Activated B cell treated with CpG ODN at 0.5 μM for 24 hours (primary cell): ENCODE measurements at regions of chr4 and their contacts with region 1.

Region 1: GRCh38 chr4:141636082-141636770 is at the start of gene IL15:
- DNase-seq: peak; percentile 35
- ATAC-seq: peak; percentile 73
- H3K4me3 Mint-ChIP-seq: peak within 1 kb of the TSS; percentile 94
- H3K27ac Mint-ChIP-seq: peak within 1 kb of the TSS; percentile 84
- H3K4me1 Mint-ChIP-seq: peaks cover 39% of the 10 kb centered on the region
- H3K27me3 Mint-ChIP-seq: no peaks in the 10 kb centered on the region
- CTCF ChIP-seq: no peak
- total RNA-seq, gene IL15: 3.4 and 3.5 TPM in 2 replicates

Region 2: DNA sequence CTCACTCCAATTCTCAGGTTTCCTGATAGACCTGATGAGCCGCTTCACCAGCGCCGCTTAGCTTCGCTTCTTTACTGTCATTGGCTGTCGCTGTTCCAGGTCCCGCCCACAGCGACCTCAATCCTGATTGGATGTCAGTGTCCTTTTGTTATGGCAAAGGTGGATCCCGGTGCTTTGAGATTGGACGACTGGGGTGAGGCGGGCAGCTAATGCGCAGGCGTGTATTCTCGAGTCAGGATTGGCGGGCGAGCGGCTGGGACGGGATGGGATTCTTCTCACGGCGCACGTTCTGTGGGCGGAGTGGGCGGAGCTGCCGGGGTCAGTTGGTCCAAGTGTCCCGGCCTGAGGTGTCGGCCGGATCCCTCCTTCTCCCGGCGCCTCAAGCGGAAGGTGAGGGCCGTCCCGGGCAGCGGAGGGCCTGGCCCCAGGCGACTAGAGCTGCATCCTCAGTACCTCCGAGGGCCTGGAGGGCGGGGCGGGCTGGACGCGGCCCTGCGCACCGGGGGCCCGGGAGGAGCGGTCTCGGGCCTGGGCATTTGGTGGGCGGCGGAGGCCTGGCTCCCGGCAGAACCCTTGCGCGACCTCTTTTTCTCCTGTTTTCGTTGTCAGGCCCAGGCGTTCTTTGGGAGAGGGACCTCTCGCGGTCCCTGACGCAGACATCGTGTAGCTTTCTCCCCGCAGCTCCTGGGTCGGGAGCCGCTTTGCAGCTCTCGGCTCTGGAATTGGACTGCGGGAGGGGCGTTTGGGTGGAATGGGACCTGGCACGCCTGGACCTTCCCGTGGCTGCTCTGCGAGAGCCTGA is 1262.7 kb before region 1 on chr4 and contains the start of gene SCOC:
- CTCF ChIA-PET with region 1: no interaction called
- POLR2A ChIA-PET with region 1: no interaction called
- intact Hi-C with region 1: loop called (anchors 5 kb)
- DNase-seq: peak; percentile 85
- ATAC-seq: peak; percentile 95
- H3K4me3 Mint-ChIP-seq: no peak within 1 kb of the TSS
- H3K27ac Mint-ChIP-seq: peak within 1 kb of the TSS; percentile 74
- H3K4me1 Mint-ChIP-seq: peaks cover 22% of the 10 kb centered on the region
- H3K27me3 Mint-ChIP-seq: no peaks in the 10 kb centered on the region
- CTCF ChIP-seq: no peak
- total RNA-seq, gene SCOC: 18.0 and 19.9 TPM in 2 replicates

Region 3: DNA sequence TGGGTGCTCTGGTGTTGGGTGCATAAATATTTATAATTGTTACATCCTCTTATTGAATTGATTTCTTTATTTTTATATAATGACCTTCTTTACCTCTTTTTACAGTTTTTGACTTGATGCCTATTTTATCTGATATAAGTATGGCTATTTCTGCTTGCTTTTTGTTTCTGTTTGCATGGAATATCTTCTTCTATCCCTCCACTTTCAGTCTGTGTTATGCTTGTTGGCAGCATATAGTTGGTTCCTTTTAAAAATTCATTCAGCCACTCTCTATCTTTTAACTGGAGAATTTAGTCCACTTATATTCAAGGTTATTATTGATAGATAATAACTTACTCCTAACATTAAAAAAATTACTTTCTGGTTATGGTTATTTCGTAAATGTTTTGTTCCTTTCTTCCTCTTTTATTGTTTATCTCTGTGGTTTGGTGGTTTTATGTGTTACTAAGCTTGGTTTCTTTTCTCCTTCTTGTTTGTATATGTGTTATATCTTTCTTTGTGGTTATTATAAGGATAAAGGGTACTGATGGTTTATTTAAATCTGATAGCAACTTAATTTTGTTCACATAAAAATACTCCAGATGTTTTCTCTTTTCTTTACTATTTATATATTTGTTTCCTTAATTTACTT is 69.6 kb after region 1 on chr4:
- CTCF ChIA-PET with region 1: no interaction called
- POLR2A ChIA-PET with region 1: interaction called, 3 read pairs
- intact Hi-C with region 1: loop called (anchors 2 kb)
- DNase-seq: no peak
- ATAC-seq: peak; percentile 37
- H3K4me3 Mint-ChIP-seq: no peak overlapping the region
- H3K27ac Mint-ChIP-seq: peak overlapping the region; percentile 54
- H3K4me1 Mint-ChIP-seq: peaks cover 27% of the 10 kb centered on the region
- H3K27me3 Mint-ChIP-seq: no peaks in the 10 kb centered on the region
- CTCF ChIP-seq: no peak